Activated CD4-positive, alpha-beta T cell treated with anti-CD3 and anti-CD28 coated beads for 36 hours (primary cell): ENCODE measurements at regions of chr1 and their contacts with region 1.

Region 1: GRCh38 chr1:203006948-203007871 is at the start of gene TMEM183A:
- DNase-seq: peak; percentile 98
- ATAC-seq: peak; percentile 96
- H3K4me3 Mint-ChIP-seq: peak within 1 kb of the TSS; percentile 99
- H3K27ac Mint-ChIP-seq: peak within 1 kb of the TSS; percentile 98
- H3K4me1 Mint-ChIP-seq: peaks cover 23% of the 10 kb centered on the region
- H3K27me3 Mint-ChIP-seq: no peaks in the 10 kb centered on the region
- total RNA-seq, gene TMEM183A: 68.6 to 71.0 TPM

Region 2: DNA sequence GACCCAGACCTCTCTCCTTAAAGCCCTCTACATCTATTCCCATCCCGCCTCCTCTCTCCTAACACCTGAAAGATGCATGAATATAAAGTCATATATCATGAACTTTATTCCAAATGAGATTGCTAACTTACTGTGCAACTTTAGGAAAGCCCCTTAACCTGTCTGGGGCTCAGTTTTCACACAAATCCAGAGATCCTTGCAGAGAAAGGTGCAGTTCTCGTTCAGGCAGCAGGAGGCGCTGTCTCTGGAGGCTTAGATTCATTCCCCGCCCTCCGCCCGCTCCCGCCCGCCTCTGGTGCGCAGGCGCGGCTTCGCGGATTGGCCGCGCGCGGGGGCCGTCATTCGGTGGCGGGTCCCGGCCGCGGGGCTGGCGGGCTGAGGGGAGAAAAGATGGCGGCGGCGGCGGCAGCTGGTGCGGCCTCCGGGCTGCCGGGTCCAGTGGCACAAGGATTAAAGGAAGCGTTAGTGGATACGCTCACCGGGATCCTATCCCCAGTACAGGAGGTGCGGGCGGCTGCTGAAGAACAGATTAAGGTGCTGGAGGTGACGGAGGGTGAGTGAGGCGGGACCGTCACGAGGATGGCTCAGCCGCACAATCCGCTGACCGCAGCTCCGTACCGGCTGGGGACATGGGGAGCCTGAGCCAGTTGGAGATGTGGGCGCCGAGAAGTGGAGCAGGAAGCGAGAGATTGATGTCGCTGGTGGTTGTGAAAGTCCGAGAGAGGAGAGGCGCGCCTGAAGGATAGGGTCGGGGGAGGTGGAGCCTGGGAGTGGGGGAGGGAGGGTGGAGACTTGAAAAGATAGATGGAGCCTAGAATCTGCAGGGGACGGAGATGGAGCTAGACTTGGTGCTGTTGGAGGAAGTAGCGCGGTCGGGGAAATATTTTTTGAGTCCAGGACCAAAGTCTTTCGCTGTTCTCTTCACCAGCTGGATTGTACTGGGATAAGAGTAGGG is 1178.1 kb before region 1 on chr1 and contains the start of gene IPO9:
- CTCF ChIA-PET with region 1: no interaction called
- POLR2A ChIA-PET with region 1: no interaction called
- intact Hi-C with region 1: loop called in 1 of 2 experiments (anchors 5 kb)
- DNase-seq: peak; percentile 97
- ATAC-seq: peak; percentile 94
- H3K4me3 Mint-ChIP-seq: peak within 1 kb of the TSS; percentile 99
- H3K27ac Mint-ChIP-seq: peak within 1 kb of the TSS; percentile 98
- H3K4me1 Mint-ChIP-seq: peaks cover 37% of the 10 kb centered on the region
- H3K27me3 Mint-ChIP-seq: no peaks in the 10 kb centered on the region
- total RNA-seq, gene IPO9: 65.1 to 66.0 TPM

Region 3: DNA sequence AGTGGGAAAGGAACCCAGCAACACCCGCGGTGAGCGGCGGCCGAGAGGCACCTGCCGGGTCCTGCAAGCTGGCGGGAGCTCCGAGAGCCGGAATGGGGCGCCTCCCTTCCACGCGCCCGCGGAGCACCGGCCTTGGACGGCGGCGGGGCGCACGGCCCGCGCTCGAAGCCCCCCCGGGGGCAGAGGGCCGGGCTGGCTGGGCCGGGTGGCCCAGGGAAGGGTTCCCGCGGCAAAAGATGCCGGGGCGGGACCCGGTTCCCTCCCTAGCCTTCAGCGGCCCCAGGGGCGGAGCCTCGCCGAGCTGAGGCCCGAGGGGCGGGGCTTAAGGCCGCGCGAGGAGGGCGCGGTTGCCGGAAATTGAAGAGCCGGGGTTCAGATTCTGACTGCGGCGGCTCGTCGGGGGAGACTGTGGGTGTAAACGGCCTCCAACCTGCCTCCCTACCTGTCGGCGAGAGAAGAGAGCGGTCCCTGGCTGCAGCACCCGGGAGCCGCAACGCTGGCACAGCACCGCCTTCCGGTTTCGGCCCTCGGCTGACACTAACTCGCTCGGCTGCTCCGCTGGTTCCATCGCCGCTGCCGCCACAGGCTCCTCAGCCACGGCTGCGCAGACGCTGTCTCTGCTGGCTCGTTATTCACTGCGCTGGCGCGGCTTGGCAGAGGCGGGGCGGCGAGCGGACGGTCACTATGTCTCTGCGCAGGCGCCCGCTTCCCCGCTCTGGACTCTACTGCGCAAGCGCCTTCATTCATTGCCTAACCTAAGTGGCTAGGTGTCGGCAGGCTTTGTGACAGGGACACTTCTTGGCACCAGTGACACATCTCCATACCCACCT is 118.5 kb before region 1 on chr1 and contains the start of gene RABIF:
- CTCF ChIA-PET with region 1: interaction called, 4 read pairs
- POLR2A ChIA-PET with region 1: interaction called, 4 read pairs
- intact Hi-C with region 1: loop called in 1 of 2 experiments (anchors 1 kb)
- DNase-seq: peak; percentile 98
- ATAC-seq: peak; percentile 94
- H3K4me3 Mint-ChIP-seq: peak within 1 kb of the TSS; percentile 91
- H3K27ac Mint-ChIP-seq: peak within 1 kb of the TSS; percentile 96
- H3K4me1 Mint-ChIP-seq: peaks cover 15% of the 10 kb centered on the region
- H3K27me3 Mint-ChIP-seq: no peaks in the 10 kb centered on the region
- total RNA-seq, gene RABIF: 6.8 to 7.4 TPM

Region 4: DNA sequence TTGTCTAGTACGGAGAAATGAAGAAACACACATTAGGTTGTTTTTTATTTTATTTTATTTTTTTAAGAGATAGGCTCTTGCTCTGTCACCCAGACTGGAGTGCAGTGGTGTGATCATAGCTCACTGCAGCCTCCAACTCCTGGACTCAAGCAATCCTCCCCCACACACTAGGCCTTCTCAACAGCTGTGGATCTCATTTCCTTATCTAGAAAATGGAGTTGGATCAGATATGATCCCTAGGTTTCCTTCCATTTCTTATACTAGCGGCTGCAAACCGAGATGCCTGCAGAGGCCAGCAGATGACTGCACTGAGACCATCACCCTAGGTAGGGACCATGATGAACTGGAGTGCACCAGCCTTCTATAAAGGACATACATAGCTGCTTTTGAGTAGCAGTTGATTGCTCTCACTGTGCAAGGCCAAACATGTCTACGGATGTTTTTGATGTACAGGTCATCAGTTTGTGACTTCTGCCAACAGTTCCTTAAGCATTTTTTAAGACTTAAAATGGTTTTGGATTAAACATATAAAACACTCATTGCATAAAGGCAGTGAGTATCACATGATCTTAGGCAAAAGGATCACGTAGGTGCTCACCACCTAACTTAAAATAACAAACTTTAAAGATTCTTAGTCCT is 68.8 kb before region 1 on chr1:
- CTCF ChIA-PET with region 1: no interaction called
- POLR2A ChIA-PET with region 1: no interaction called
- intact Hi-C with region 1: no loop called
- DNase-seq: no peak
- ATAC-seq: no peak
- H3K4me3 Mint-ChIP-seq: no peak overlapping the region
- H3K27ac Mint-ChIP-seq: no peak overlapping the region
- H3K4me1 Mint-ChIP-seq: peaks cover 5% of the 10 kb centered on the region
- H3K27me3 Mint-ChIP-seq: no peaks in the 10 kb centered on the region

Region 5: DNA sequence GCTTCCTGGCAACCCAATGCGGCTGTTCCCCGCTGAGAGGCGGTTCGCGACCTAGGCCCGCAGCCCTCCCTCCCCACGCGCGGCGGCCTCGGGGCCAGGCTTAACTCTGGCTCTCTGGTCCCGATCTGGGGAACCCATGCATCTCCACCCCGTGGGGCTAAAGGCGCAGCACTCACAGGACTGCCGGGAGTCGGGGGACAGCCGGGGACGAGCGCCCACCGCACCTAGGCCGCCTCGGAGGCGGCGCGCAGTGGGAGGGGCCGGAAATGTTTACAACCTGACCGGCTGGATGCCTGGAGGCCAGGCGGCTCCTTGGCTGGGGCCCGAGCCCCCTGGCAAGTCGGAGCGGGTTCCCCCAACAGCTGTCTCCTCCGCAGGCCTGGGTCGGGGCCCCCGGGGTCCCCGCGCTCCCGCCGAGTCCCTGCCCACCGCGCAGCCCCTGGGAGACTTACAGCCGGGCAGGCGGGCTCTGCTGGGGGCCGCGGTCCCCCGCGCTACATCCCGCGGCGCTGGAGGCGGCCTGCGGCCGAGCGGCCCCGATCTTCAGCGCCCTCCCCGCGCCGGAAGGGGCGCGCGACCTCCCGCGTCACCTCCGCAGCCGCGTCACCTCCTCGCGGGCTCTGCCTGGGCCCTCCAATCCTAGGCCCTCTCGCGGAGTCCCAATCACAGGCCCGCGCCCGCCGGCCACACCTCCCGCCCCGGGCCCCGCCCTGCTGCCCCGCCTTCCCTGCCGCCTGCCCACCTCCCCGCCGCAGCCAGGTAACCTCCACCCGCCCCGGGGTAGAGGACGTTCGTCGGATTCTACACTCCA is 49.3 kb before region 1 on chr1 and contains the start of gene ADIPOR1:
- CTCF ChIA-PET with region 1: no interaction called
- POLR2A ChIA-PET with region 1: no interaction called
- intact Hi-C with region 1: loop called (anchors 1 kb)
- DNase-seq: peak; percentile 96
- ATAC-seq: peak; percentile 100
- H3K4me3 Mint-ChIP-seq: peak within 1 kb of the TSS; percentile 83
- H3K27ac Mint-ChIP-seq: peak within 1 kb of the TSS; percentile 82
- H3K4me1 Mint-ChIP-seq: peaks cover 46% of the 10 kb centered on the region
- H3K27me3 Mint-ChIP-seq: no peaks in the 10 kb centered on the region
- total RNA-seq, gene ADIPOR1: 65.4 to 85.1 TPM

Region 6: DNA sequence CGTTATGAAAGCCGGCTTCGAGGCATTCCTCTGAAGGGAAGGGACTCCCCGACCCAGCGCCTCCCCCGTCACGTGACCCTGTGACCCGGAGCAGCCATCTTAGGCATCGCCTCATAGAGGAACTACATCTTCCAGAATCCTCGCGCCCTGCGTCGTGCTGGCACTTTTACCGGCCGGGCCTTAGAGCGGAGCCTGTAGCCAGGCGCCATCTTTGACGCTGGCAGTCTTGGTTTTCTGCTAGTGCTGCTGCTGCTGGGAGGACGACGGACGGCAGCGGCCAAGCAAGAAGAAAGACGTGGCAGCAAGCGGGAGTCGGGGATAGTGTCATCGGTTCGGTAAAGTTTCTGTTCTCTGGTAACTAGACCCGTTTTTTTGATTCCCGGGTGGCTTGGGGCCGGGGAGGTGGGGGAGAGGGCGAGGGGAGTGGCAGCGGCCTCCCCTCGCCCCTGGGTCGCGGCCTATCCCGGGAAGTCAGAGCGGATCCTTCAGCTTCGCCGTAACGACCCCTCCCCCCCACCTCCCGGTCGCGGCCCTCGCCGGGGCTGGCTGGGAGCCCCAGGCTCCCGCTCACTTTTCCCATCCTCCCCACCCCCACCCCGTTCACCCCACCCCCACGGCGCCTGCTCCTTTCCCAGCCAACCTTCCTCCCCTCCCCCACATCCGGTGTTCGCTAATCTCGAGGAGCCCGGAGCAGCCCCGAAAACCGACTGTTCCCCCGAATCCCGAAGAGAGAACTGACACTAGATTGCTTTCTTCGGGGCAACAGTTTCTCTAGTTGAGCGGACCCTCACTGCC is 788.4 kb after region 1 on chr1 and contains the starts of genes ZBED6 and ZC3H11A:
- CTCF ChIA-PET with region 1: no interaction called
- POLR2A ChIA-PET with region 1: no interaction called
- intact Hi-C with region 1: loop called in 1 of 2 experiments (anchors 10 kb)
- DNase-seq: peak; percentile 99
- ATAC-seq: peak; percentile 99
- H3K4me3 Mint-ChIP-seq: peak within 1 kb of the TSS; percentile 86
- H3K27ac Mint-ChIP-seq: peak within 1 kb of the TSS; percentile 96
- H3K4me1 Mint-ChIP-seq: peaks cover 45% of the 10 kb centered on the region
- H3K27me3 Mint-ChIP-seq: no peaks in the 10 kb centered on the region
- total RNA-seq, gene ZBED6: 16.4 to 19.3 TPM
- total RNA-seq, gene ZC3H11A: 92.8 to 112 TPM